Esophagus muscularis mucosa (tissue), 4 donors: ENCODE measurements at regions of chr12 and their contacts with region 1.

Region 1: GRCh38 chr12:106342397-106343213 is 14.9 kb upstream of the POLR3B start:
- DNase-seq: no peak
- H3K4me3 ChIP-seq: peak overlapping the region; percentile 15 to 31 (median 22)
- H3K27ac ChIP-seq: peak overlapping the region; percentile 61 to 76 (median 70)
- H3K4me1 ChIP-seq: peaks cover 28 to 42% (median 39%) of the 10 kb centered on the region in 4 donors
- H3K27me3 ChIP-seq: no peaks in the 10 kb centered on the region
- CTCF ChIP-seq: no peak
- EP300 ChIP-seq: no peak
- POLR2A ChIP-seq: no peak

Region 2: DNA sequence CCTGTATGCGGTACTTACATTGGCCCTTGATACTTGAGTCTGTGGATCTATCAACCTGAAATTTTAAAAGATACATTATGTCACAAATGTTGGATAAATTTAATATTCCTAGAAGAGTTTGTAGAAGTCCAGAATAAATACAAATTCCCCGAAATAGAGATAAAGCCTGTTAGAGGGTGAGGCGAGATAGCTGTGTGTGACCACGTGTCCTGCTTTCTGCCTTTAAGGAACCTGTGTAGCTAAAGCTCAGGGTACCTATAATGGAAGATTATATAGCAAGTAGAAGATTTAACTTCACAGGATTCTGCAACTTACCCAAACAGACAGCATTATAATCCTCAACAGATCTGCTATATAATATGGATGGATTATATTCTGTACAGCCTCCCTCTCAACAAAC is 1165.4 kb before region 1 on chr12:
- intact Hi-C with region 1: no loop called
- DNase-seq: no peak
- H3K4me3 ChIP-seq: no peak overlapping the region
- H3K27ac ChIP-seq: no peak overlapping the region
- H3K4me1 ChIP-seq: no peaks in the 10 kb centered on the region
- H3K27me3 ChIP-seq: no peaks in the 10 kb centered on the region
- CTCF ChIP-seq: no peak
- EP300 ChIP-seq: no peak
- POLR2A ChIP-seq: no peak

Region 3: DNA sequence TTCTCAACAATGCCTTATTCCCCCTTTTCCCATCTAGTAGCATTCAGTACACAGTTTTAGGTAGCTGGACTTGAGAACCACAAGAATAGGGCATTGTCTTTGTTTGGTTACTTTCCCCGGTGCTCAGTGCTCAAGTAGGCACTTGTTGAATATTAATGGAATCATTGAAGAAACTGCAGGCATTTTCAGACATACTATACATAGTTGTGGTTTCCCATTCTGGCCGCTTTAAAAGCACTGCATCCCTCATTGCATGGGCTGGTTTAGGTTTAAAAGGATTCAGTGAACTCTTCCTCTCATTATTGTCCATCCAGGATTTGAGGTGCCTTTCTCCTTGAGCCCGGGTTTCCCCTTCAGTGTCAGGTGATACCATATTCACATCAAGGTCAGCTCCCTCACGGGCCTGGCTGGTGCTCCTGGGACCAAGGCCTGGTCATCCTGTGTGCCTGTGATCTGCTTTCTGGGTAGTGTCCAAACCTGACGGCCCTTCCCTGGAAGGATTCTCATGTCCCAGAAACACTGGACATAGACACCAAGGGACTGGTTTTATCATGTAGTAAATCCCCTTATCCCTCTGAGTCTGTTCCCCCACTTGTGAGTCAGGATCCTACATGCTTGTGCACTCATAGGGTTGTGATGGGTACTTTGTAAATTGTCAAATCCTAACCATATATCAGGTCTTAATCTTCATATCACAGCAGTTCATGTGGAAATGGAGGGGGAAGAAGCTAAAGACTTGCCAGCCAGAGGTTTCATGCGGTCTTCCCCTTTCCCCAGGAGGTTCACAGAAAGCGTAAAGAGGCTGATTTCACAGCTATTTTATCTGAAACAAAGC is 32.7 kb before region 1 on chr12:
- intact Hi-C with region 1: loop called (anchors 5 kb)
- DNase-seq: no peak
- H3K4me3 ChIP-seq: no peak overlapping the region
- H3K27ac ChIP-seq: no peak overlapping the region
- H3K4me1 ChIP-seq: peaks cover 50 to 68% (median 59%) of the 10 kb centered on the region in 4 donors
- H3K27me3 ChIP-seq: no peaks in the 10 kb centered on the region
- CTCF ChIP-seq: no peak
- EP300 ChIP-seq: no peak
- POLR2A ChIP-seq: no peak

Region 4: GRCh38 chr12:106493531-106493930 is 150.9 kb after region 1 on chr12:
- intact Hi-C with region 1: no loop called
- DNase-seq: no peak
- H3K4me3 ChIP-seq: no peak overlapping the region
- H3K27ac ChIP-seq: no peak overlapping the region
- H3K4me1 ChIP-seq: no peaks in the 10 kb centered on the region
- H3K27me3 ChIP-seq: no peaks in the 10 kb centered on the region
- CTCF ChIP-seq: no peak
- EP300 ChIP-seq: no peak
- POLR2A ChIP-seq: no peak

Region 5: GRCh38 chr12:106573239-106573638 is 230.6 kb after region 1 on chr12:
- intact Hi-C with region 1: no loop called
- DNase-seq: no peak
- H3K4me3 ChIP-seq: no peak overlapping the region
- H3K27ac ChIP-seq: no peak overlapping the region
- H3K4me1 ChIP-seq: no peaks in the 10 kb centered on the region
- H3K27me3 ChIP-seq: peaks cover 0 to 22% (median 1%) of the 10 kb centered on the region in 4 donors
- CTCF ChIP-seq: no peak
- EP300 ChIP-seq: no peak
- POLR2A ChIP-seq: no peak